ENCODE measurements at regions of chr6 and their contacts with region 1.

Region 1: DNA sequence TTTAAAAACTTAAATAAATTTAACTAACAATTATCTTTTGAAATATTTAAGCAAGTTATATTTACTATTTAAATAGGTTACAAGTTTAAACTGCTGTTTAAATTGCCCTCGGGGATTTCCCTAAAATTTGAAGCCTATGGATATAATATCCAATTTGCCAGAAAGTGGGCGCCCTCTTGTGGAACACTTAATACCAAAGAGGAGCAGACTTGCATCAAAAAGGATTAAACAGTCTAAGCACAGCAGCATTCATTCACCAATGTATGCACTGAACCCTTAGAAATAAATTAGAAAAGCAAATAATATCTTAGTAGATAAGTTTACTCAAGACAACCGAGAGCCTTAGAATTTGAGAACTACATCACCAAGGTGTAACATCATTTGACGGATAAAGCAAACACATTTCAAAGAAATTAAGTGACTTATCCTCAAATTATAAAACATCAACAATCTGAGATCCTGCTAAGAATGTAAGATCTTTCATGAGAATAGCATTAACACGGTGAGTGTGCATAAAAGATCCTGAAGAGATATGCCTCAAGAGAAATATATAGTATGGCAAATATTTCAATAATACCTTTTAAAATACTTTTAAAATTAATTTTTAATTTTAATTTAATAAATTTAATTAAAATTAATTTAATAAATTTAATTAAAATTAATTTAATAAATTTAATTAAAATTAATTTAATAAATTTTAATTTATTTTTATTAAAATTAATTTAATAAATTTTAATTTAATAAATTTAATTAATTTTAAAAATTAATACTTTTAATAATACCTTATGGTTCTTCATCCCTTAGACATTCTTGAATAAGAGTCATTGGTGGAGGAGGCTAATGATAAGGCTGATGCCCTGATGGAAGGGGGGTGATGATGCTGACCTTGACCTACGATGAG is 11.5 kb upstream of the MEP1A start:
- DNase-seq: peak; percentile 78
- H3K4me3 Mint-ChIP-seq: no peak overlapping the region
- H3K27ac Mint-ChIP-seq: no peak overlapping the region
- H3K4me1 Mint-ChIP-seq: no peaks in the 10 kb centered on the region
- H3K27me3 Mint-ChIP-seq: peaks cover 10% of the 10 kb centered on the region
- CTCF ChIP-seq: peak; percentile 53

Region 2: DNA sequence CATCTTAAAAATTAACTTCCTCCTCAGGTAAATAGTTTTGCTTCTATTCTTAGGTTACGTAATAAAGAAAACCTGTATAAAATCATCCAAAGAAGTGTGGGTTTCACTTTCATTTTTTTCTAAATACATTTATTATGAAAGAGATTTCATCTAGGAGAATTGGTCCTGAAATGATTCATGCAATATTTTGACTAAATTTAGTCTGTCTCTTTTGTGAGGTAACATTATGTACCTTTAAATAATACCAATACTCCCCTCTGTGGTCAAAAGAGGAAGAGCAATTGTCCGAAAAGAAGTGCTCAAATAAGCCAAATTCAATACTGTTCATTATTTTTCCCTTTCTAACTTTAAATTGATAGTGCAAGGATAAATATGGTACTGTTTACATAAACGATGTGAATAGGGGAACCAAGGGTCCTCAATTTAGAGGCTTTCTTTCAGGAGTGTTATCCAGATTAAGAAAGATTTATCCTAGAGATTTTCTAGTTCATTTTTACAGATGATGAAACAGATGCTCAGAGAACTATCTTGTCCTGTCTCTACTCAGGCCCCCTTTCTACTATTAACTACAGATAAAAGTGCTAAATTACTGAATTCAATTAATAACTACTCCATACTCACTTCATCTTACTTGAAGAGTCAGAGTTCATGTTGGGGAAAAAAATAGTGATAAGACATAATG is 155.4 kb before region 1 on chr6:
- CTCF ChIA-PET with region 1: no interaction called
- POLR2A ChIA-PET with region 1: no interaction called
- intact Hi-C with region 1: loop called (anchors 2 kb)
- DNase-seq: peak; percentile 62
- H3K4me3 Mint-ChIP-seq: no peak overlapping the region
- H3K27ac Mint-ChIP-seq: no peak overlapping the region
- H3K4me1 Mint-ChIP-seq: no peaks in the 10 kb centered on the region
- H3K27me3 Mint-ChIP-seq: no peaks in the 10 kb centered on the region
- CTCF ChIP-seq: peak; percentile 55

Region 3: DNA sequence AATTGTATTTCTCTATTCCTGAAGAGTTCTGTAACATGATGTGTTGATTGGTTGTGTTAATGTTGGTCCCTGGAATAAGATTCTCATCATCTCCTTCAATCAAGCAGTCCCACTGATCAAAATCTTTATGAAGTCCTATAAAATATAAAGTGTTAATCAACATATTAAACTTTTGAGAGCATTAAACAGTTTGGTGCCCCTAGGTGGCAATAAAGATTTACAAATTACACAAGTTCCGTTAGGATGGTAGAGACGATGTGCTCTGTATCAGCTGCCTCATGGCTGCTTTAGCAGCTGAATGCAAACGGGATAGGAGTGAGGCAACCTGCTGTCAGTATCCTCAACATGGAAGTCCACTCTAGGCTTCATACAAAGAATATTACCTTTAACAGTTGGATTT is 77.2 kb before region 1 on chr6:
- CTCF ChIA-PET with region 1: interaction called, 3 read pairs
- POLR2A ChIA-PET with region 1: interaction called, 3 read pairs
- intact Hi-C with region 1: loop called (anchors 1 kb)
- DNase-seq: peak; percentile 53
- H3K4me3 Mint-ChIP-seq: no peak overlapping the region
- H3K27ac Mint-ChIP-seq: no peak overlapping the region
- H3K4me1 Mint-ChIP-seq: peaks cover 1% of the 10 kb centered on the region
- H3K27me3 Mint-ChIP-seq: no peaks in the 10 kb centered on the region
- CTCF ChIP-seq: peak; percentile 38

Region 4: GRCh38 chr6:47209632-47210031 is 427.9 kb after region 1 on chr6:
- CTCF ChIA-PET with region 1: no interaction called
- POLR2A ChIA-PET with region 1: no interaction called
- intact Hi-C with region 1: no loop called
- DNase-seq: no peak
- H3K4me3 Mint-ChIP-seq: no peak overlapping the region
- H3K27ac Mint-ChIP-seq: no peak overlapping the region
- H3K4me1 Mint-ChIP-seq: peaks cover 12% of the 10 kb centered on the region
- H3K27me3 Mint-ChIP-seq: no peaks in the 10 kb centered on the region
- CTCF ChIP-seq: no peak